Aorta (tissue), 5 donors: ENCODE measurements at regions of chr13 and their contacts with region 1.

Region 1: DNA sequence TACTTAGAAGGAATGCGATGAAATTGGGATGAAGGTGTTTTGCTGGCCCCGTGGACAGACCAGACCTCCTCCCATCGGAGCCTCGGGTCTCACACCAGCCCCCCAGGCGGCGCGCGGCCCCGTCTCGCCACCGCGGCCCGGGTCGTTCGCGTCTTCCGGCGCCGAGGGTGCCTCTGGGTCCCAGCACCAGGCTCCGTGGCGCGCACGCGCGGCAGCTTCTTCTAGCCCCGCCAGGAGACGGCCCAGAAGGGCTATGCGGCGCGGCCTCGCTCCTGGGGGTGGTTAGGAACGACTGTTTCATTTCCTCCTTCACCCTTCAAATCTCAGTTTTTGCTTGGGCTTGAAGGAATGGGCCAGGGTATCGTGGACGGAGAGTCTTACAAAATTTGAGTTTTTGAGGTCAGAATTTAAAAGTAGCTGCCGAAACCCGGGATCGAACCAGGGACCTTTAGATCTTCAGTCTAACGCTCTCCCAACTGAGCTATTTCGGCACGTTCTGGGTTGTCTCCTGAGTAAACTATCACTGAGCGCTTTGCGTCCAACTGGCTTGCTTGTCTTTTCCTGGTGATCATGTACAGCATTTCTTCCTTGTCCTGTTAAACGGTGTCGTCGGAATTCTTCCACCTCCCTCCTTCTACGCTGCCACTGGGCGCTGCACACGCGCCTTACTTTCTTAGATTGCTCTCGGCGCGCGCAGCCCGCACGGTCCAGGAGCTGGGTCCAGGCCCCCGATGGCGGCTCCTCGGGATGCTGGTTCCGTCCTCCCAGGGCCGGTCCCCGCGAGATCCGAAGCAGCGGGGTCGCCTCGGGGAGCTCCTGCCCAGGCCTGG is 46.5 kb downstream of the TGDS start:
- DNase-seq: peak; percentile 94 to 97
- ATAC-seq: peak; percentile 95
- H3K4me3 ChIP-seq: peak overlapping the region; percentile 59 to 74
- H3K27ac ChIP-seq: peak overlapping the region; percentile 72 to 91
- H3K4me1 ChIP-seq: peaks cover 0 to 2% of the 10 kb centered on the region in 2 donors
- H3K27me3 ChIP-seq: no peaks in the 10 kb centered on the region

Region 2: GRCh38 chr13:94590744-94591143 is 41.3 kb after region 1 on chr13:
- intact Hi-C with region 1: loop called in 1 of 2 experiments (anchors 5 kb)
- DNase-seq: no peak
- ATAC-seq: no peak
- H3K4me3 ChIP-seq: no peak overlapping the region
- H3K27ac ChIP-seq: no peak overlapping the region
- H3K4me1 ChIP-seq: peaks cover 0 to 9% of the 10 kb centered on the region in 2 donors
- H3K27me3 ChIP-seq: no peaks in the 10 kb centered on the region

Region 3: DNA sequence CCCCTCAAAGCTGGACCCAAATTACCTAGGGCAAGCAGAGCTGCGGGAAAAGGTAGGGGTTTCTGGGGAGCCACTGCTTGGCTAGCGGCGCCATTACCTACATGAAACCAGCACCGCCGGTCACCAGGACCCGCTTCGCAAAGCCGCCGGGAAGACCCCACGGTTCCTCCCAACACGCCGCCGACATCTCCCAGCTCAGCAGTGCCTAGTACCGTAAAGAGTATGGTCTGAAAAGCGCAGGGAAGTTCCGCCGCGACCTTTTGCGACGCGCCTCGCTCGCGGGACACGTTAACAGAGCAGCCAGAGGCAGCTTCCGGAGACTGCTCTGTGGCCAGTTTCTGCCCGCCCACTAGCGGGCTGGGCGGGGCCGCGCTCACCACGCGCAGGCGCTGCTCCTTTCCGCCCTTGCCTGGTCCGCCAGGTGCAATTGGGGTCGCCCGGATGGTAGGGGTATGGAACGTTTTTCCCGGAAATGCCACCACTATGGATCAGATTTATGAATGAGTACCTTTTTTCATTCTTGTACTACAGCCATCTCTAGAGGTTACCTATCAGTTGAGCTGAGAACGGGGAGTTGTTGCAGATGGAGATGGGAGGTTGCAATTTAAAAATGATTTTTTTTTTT is 46.6 kb after region 1 on chr13 and contains the start of gene TGDS:
- intact Hi-C with region 1: loop called (anchors 1 to 5 kb)
- DNase-seq: peak; percentile 95 to 97
- ATAC-seq: peak; percentile 97
- H3K4me3 ChIP-seq: peak within 1 kb of the TSS; percentile 73 to 98
- H3K27ac ChIP-seq: peak within 1 kb of the TSS in 1 of 2 donors; percentile 42
- H3K4me1 ChIP-seq: peaks cover 0 to 9% of the 10 kb centered on the region in 2 donors
- H3K27me3 ChIP-seq: no peaks in the 10 kb centered on the region
- total RNA-seq, gene TGDS: 8.9 to 10.4 TPM